ENCODE measurements at regions of chr3 and their contacts with region 1.

Region 1: GRCh38 chr3:63818281-63819150 is 583 bp upstream of the C3orf49 start:
- DNase-seq: peak; percentile 25 to 71 (median 64)
- ATAC-seq: peak; percentile 56
- H3K4me3 ChIP-seq: no peak overlapping the region
- H3K4me3 Mint-ChIP-seq: no peak overlapping the region
- H3K27ac ChIP-seq: no peak overlapping the region
- H3K27ac Mint-ChIP-seq: no peak overlapping the region
- H3K4me1 ChIP-seq: no peaks in the 10 kb centered on the region
- H3K4me1 Mint-ChIP-seq: peaks cover 8% of the 10 kb centered on the region
- H3K27me3 ChIP-seq: no peaks in the 10 kb centered on the region
- H3K27me3 Mint-ChIP-seq: no peaks in the 10 kb centered on the region
- CTCF ChIP-seq: peak; percentile 89

Region 2: GRCh38 chr3:62201438-62202035 is 1617.0 kb before region 1 on chr3:
- CTCF ChIA-PET with region 1: no interaction called
- POLR2A ChIA-PET with region 1: no interaction called
- intact Hi-C with region 1: loop called in 1 of 2 experiments (anchors 2 kb)
- DNase-seq: peak in 2 of 9 experiments; percentile 7 to 14
- ATAC-seq: no peak
- H3K4me3 ChIP-seq: no peak overlapping the region
- H3K4me3 Mint-ChIP-seq: no peak overlapping the region
- H3K27ac ChIP-seq: no peak overlapping the region
- H3K27ac Mint-ChIP-seq: no peak overlapping the region
- H3K4me1 ChIP-seq: no peaks in the 10 kb centered on the region
- H3K4me1 Mint-ChIP-seq: no peaks in the 10 kb centered on the region
- H3K27me3 ChIP-seq: no peaks in the 10 kb centered on the region
- H3K27me3 Mint-ChIP-seq: peaks cover 2% of the 10 kb centered on the region
- CTCF ChIP-seq: peak; percentile 47

Region 3: GRCh38 chr3:62332835-62333244 is 1485.7 kb before region 1 on chr3:
- CTCF ChIA-PET with region 1: interaction called, 4 read pairs
- POLR2A ChIA-PET with region 1: no interaction called
- intact Hi-C with region 1: loop called in 1 of 2 experiments (anchors 1 kb)
- DNase-seq: peak in 2 of 9 experiments; percentile 4 to 9
- ATAC-seq: no peak
- H3K4me3 ChIP-seq: no peak overlapping the region
- H3K4me3 Mint-ChIP-seq: no peak overlapping the region
- H3K27ac ChIP-seq: no peak overlapping the region
- H3K27ac Mint-ChIP-seq: no peak overlapping the region
- H3K4me1 ChIP-seq: no peaks in the 10 kb centered on the region
- H3K4me1 Mint-ChIP-seq: no peaks in the 10 kb centered on the region
- H3K27me3 ChIP-seq: no peaks in the 10 kb centered on the region
- H3K27me3 Mint-ChIP-seq: peaks cover 6% of the 10 kb centered on the region
- CTCF ChIP-seq: peak; percentile 61

Region 4: GRCh38 chr3:62622553-62623193 is 1195.8 kb before region 1 on chr3:
- CTCF ChIA-PET with region 1: no interaction called
- POLR2A ChIA-PET with region 1: no interaction called
- intact Hi-C with region 1: loop called (anchors 2 to 5 kb)
- DNase-seq: peak in 2 of 9 experiments; percentile 1 to 8
- ATAC-seq: no peak
- H3K4me3 ChIP-seq: no peak overlapping the region
- H3K4me3 Mint-ChIP-seq: no peak overlapping the region
- H3K27ac ChIP-seq: no peak overlapping the region
- H3K27ac Mint-ChIP-seq: no peak overlapping the region
- H3K4me1 ChIP-seq: no peaks in the 10 kb centered on the region
- H3K4me1 Mint-ChIP-seq: no peaks in the 10 kb centered on the region
- H3K27me3 ChIP-seq: no peaks in the 10 kb centered on the region
- H3K27me3 Mint-ChIP-seq: no peaks in the 10 kb centered on the region
- CTCF ChIP-seq: peak; percentile 16

Region 5: DNA sequence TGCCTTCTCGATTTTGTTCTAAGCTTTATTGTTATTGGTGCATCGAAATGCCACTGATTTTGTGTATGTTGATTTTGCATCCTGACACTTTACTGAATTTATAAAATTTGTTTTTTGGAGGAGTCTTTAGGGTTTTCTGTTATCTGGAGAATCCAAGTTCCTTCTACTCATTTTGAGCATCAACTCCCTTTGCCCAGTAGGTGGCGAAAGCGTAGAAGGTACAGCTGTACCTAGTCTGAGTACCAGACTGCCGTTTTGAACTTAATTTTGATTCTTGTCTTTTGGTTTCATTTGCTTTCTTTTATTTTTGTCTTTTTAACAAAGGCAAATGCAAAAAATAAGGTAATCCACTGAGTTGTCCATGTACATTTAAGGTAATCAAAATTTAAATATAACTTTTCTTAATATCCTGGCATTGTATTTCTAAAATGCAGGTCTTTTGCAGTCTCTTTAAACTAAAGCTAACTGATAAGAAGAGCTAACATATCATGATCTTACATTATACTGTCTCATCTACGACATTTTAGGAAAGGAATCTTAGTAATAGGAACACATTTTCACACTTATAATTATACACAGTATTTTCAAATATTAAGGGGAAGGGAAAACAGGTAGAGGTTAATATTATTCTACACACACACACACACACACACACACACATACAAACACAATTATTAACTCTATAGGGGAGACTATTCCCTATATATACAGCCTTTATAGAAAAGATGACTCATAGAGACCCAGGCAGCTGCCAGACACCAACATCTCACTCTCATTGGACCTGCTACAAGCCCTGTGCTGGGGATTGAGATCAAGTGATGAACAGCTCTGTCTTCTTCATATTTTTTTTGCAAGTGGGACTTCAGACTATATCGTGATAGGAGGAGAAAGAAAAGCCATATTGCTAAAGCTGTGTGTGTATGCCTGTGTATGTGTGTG is 468.7 kb before region 1 on chr3:
- CTCF ChIA-PET with region 1: interaction called, 24 read pairs
- POLR2A ChIA-PET with region 1: no interaction called
- intact Hi-C with region 1: loop called in 1 of 2 experiments (anchors 2 kb)
- DNase-seq: peak in 3 of 9 experiments; percentile 11 to 36 (median 26)
- ATAC-seq: no peak
- H3K4me3 ChIP-seq: no peak overlapping the region
- H3K4me3 Mint-ChIP-seq: no peak overlapping the region
- H3K27ac ChIP-seq: no peak overlapping the region
- H3K27ac Mint-ChIP-seq: no peak overlapping the region
- H3K4me1 ChIP-seq: no peaks in the 10 kb centered on the region
- H3K4me1 Mint-ChIP-seq: no peaks in the 10 kb centered on the region
- H3K27me3 ChIP-seq: no peaks in the 10 kb centered on the region
- H3K27me3 Mint-ChIP-seq: peaks cover 17% of the 10 kb centered on the region
- CTCF ChIP-seq: peak; percentile 43

Region 6: GRCh38 chr3:63830526-63830925 is 12.0 kb after region 1 on chr3:
- CTCF ChIA-PET with region 1: interaction called, 17 read pairs
- POLR2A ChIA-PET with region 1: no interaction called
- intact Hi-C with region 1: no loop called
- DNase-seq: no peak
- ATAC-seq: no peak
- H3K4me3 ChIP-seq: no peak overlapping the region
- H3K4me3 Mint-ChIP-seq: no peak overlapping the region
- H3K27ac ChIP-seq: no peak overlapping the region
- H3K27ac Mint-ChIP-seq: no peak overlapping the region
- H3K4me1 ChIP-seq: no peaks in the 10 kb centered on the region
- H3K4me1 Mint-ChIP-seq: no peaks in the 10 kb centered on the region
- H3K27me3 ChIP-seq: no peaks in the 10 kb centered on the region
- H3K27me3 Mint-ChIP-seq: no peaks in the 10 kb centered on the region
- CTCF ChIP-seq: no peak

Region 7: GRCh38 chr3:63933459-63933858 is 114.9 kb after region 1 on chr3:
- CTCF ChIA-PET with region 1: no interaction called
- POLR2A ChIA-PET with region 1: no interaction called
- intact Hi-C with region 1: no loop called
- DNase-seq: no peak
- ATAC-seq: no peak
- H3K4me3 ChIP-seq: no peak overlapping the region
- H3K4me3 Mint-ChIP-seq: no peak overlapping the region
- H3K27ac ChIP-seq: peak overlapping the region in 1 of 2 experiments; percentile 63
- H3K27ac Mint-ChIP-seq: peak overlapping the region; percentile 8
- H3K4me1 ChIP-seq: peaks cover 31% of the 10 kb centered on the region
- H3K4me1 Mint-ChIP-seq: peaks cover 77% of the 10 kb centered on the region
- H3K27me3 ChIP-seq: no peaks in the 10 kb centered on the region
- H3K27me3 Mint-ChIP-seq: no peaks in the 10 kb centered on the region
- CTCF ChIP-seq: no peak